ENCODE measurements at regions of chr3 and their contacts with region 1.

Region 1: GRCh38 chr3:9302425-9303181 is 53.2 kb upstream of the SRGAP3 start:
- DNase-seq: peak; percentile 90

Region 2: GRCh38 chr3:8970971-8971589 is 331.5 kb before region 1 on chr3:
- CTCF ChIA-PET with region 1: interaction called, 22 read pairs
- POLR2A ChIA-PET with region 1: no interaction called
- DNase-seq: peak; percentile 56

Region 3: DNA sequence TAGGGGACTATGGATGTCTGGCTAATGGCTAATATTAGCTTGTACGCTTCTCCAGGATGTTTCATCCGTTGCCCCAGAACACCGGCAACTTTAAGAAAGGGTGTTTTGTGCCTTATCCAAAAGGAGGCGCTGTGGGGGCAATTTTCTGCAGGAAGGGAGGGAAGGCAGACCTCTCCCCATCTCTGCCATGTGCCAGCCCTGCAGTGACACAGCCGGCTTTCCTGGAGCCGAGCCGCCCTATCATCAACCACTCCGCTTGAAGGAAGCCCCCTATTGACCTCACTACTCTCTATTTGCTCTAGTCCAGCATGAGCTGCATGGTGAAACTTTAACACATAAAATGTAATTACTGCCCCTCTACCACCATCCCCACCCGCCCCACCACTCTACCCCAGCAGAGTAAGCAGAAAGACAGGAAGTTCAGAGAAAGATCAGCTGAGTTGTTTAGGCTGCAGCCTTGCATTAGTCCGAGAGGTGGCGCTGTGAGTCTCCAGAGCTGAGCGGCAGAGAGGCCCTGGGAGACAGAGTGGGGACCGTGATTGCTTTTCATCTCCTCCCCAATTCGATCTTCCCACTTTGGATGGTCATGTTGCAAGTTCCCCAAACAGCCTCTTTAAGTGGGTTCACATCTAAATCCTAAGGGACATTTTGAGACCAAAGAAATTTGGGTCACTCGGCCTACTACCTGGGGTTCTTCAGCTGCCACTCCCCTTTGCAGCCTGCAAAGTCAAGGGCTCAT is 314.8 kb before region 1 on chr3:
- CTCF ChIA-PET with region 1: interaction called, 20 read pairs
- POLR2A ChIA-PET with region 1: no interaction called
- DNase-seq: peak; percentile 76